Colonic mucosa (tissue), 4 donors: ENCODE measurements at regions of chr18 and their contacts with region 1.

Region 1: GRCh38 chr18:49510393-49511115 is 23.5 kb upstream of the C18orf32 start:
- DNase-seq: peak; percentile 50
- H3K4me3 ChIP-seq: no peak overlapping the region
- H3K27ac ChIP-seq: no peak overlapping the region
- H3K4me1 ChIP-seq: no peaks in the 10 kb centered on the region
- H3K27me3 ChIP-seq: no peaks in the 10 kb centered on the region
- CTCF ChIP-seq: peak; percentile 86

Region 2: GRCh38 chr18:49561289-49562193 is 51.0 kb after region 1 on chr18 and contains the start of gene LIPG:
- intact Hi-C with region 1: no loop called
- DNase-seq: peak; percentile 93
- H3K4me3 ChIP-seq: peak within 1 kb of the TSS; percentile 45
- H3K27ac ChIP-seq: peak within 1 kb of the TSS; percentile 51
- H3K4me1 ChIP-seq: peaks cover 6% of the 10 kb centered on the region
- H3K27me3 ChIP-seq: no peaks in the 10 kb centered on the region
- CTCF ChIP-seq: no peak
- total RNA-seq, gene LIPG: 25.5 to 32.1 TPM

Region 3: GRCh38 chr18:49768051-49768391 is 257.5 kb after region 1 on chr18:
- intact Hi-C with region 1: loop called (anchors 5 kb)
- DNase-seq: peak; percentile 70
- H3K4me3 ChIP-seq: no peak overlapping the region
- H3K27ac ChIP-seq: no peak overlapping the region
- H3K4me1 ChIP-seq: no peaks in the 10 kb centered on the region
- H3K27me3 ChIP-seq: no peaks in the 10 kb centered on the region
- CTCF ChIP-seq: peak; percentile 55

Region 4: DNA sequence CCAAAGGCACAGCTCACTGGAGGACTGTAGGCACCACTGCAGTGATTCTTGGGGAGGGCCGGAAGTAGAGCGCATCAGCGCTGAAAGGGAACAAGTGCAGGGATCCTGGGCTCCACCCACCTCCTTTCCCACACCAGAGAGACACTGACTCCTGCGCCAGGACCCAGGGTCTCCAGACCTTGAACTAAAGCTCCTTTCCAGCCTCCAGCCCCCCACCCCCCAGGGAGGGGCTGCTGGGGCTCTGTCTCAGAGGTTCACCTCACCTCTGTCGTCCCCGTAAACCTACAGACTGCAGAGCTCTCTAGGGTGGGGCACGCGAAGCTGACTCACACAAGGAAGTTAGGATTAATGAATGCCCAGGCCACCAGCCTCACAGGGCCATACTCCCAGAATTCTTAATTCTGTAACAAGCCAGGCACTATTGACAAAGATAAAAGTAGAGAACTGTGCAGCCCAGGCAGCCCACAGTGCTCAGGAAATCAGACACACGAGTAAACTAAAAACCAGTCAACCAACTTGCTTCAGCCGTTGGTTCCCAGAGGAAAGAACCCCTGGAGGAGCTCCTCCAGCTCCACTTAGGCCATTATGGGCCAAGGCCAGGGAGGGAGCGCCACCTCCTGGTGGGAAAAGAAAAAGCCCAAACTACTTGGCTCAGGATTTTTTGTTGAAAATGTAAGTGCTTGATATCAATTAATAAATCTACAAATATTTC is 347.9 kb after region 1 on chr18:
- intact Hi-C with region 1: loop called (anchors 5 kb)
- DNase-seq: peak; percentile 79
- H3K4me3 ChIP-seq: no peak overlapping the region
- H3K27ac ChIP-seq: peak overlapping the region; percentile 93
- H3K4me1 ChIP-seq: peaks cover 5% of the 10 kb centered on the region
- H3K27me3 ChIP-seq: no peaks in the 10 kb centered on the region
- CTCF ChIP-seq: peak; percentile 93

Region 5: GRCh38 chr18:49944663-49945062 is 434.1 kb after region 1 on chr18:
- intact Hi-C with region 1: no loop called
- DNase-seq: no peak
- H3K4me3 ChIP-seq: no peak overlapping the region
- H3K27ac ChIP-seq: no peak overlapping the region
- H3K4me1 ChIP-seq: no peaks in the 10 kb centered on the region
- H3K27me3 ChIP-seq: no peaks in the 10 kb centered on the region
- CTCF ChIP-seq: no peak